Endothelial cell of umbilical vein (primary cell): ENCODE measurements at regions of chr6 and their contacts with region 1.

Region 1: DNA sequence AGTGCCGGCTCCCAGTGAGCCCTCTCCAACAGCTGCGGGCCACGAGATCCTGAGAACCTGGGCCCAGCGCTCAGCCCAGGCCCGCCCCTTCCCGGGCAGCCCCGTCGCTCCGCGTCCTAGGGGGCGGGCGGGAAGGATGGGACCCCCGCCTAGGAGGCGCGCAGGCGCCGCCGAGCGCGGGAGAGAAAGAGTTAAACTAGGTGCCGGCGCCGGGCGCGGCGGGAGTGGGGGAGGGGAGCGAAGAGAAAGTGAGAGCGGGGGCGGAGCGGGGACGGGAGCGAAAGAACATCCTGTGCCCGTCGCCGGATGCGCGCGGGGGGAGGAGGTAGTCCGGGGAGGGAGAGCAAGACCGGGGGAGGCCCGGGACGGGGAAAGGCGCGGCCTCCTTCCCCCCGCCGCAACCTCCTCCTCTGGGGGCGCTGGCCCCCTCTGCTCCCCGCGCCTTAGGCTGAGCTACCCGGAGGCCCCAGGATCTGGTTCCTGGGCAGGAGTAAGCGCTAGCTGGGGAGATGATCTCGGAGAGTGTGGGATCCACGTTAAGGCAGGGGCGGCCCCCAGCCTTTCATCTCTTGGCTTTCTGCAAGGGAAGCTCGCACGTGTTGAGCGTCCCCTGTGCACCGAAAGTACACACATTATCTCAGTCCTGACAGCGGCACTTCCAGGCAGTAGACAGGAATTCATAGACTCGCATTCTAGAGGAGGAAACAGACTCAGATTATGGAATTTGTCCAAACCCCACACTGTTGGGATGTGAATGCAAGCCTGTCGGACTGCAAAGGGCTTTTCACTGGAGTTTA is 4.9 kb upstream of the ARMC12 start:
- DNase-seq: peak; percentile 87
- H3K4me3 ChIP-seq: peak overlapping the region; percentile 51 to 73 (median 61)
- H3K27ac ChIP-seq: peak overlapping the region; percentile 88
- H3K4me1 ChIP-seq: peaks cover 34% of the 10 kb centered on the region
- H3K27me3 ChIP-seq: no peaks in the 10 kb centered on the region
- CTCF ChIP-seq: peak; percentile 5 to 28
- POLR2A ChIP-seq: peak; percentile 75

Region 2: DNA sequence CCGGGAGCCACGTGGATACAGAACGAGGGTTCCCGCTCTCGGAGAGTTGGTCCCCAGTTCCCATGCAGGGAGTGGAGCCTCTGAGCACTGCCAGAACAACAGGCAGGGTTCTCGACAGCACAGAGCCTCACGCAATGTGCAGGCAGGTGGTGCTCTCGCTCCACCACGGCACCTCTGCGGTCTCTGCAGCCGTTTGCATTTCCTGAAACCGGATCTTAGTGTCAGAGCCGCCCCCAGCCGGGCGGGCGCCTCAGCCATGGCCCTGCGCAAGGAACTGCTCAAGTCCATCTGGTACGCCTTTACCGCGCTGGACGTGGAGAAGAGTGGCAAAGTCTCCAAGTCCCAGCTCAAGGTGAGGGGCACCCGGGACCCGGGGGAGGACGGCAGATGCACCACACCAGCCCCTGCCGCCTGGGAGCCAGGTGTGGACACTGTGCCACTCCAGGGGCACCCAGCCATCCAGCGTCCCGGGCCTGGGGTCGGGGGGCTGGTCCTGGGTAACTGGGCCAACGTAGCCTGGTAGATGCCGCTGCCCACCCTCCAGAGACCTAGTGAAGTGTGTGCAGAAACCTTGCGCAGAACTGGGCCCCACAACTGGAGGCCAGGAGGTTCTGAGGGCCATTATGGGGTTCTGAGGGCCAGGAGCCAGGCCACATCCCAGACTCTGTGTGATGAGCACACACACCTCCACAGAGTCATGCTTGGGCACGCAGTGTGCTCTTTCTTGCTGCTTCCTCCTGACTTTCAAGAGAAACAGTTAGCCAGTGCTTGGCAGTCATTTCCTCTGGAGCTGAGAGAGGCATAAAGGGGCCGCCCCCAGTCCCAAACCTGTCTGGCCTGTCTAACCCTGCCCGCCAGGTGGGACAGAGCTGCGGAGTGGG is 434.1 kb before region 1 on chr6 and contains the start of gene DEF6:
- CTCF ChIA-PET with region 1: interaction called, 4 read pairs
- POLR2A ChIA-PET with region 1: no interaction called
- dilution Hi-C with region 1: no loop called
- intact Hi-C with region 1: loop called (anchors 10 kb)
- DNase-seq: peak; percentile 80
- H3K4me3 ChIP-seq: no peak within 1 kb of the TSS
- H3K27ac ChIP-seq: peak within 1 kb of the TSS; percentile 27
- H3K4me1 ChIP-seq: peaks cover 14% of the 10 kb centered on the region
- H3K27me3 ChIP-seq: no peaks in the 10 kb centered on the region
- CTCF ChIP-seq: peak; percentile 74 to 82
- POLR2A ChIP-seq: no peak
- total RNA-seq, gene DEF6: 0.77 and 1.0 TPM in 2 replicates

Region 3: GRCh38 chr6:35562053-35562452 is 169.9 kb before region 1 on chr6:
- CTCF ChIA-PET with region 1: interaction called, 60 read pairs
- POLR2A ChIA-PET with region 1: no interaction called
- dilution Hi-C with region 1: no loop called
- intact Hi-C with region 1: no loop called
- DNase-seq: no peak
- H3K4me3 ChIP-seq: no peak overlapping the region
- H3K27ac ChIP-seq: no peak overlapping the region
- H3K4me1 ChIP-seq: no peaks in the 10 kb centered on the region
- H3K27me3 ChIP-seq: peaks cover 20 to 28% of the 10 kb centered on the region in 2 experiments
- CTCF ChIP-seq: no peak
- POLR2A ChIP-seq: no peak

Region 4: GRCh38 chr6:35601331-35602132 is 130.4 kb before region 1 on chr6:
- CTCF ChIA-PET with region 1: interaction called, 29 read pairs
- POLR2A ChIA-PET with region 1: no interaction called
- dilution Hi-C with region 1: no loop called
- intact Hi-C with region 1: loop called (anchors 2 kb)
- DNase-seq: peak; percentile 88
- H3K4me3 ChIP-seq: peak overlapping the region in 1 of 3 experiments; percentile 21
- H3K27ac ChIP-seq: peak overlapping the region; percentile 96
- H3K4me1 ChIP-seq: peaks cover 72% of the 10 kb centered on the region
- H3K27me3 ChIP-seq: no peaks in the 10 kb centered on the region
- CTCF ChIP-seq: no peak
- POLR2A ChIP-seq: no peak

Region 5: GRCh38 chr6:35640017-35640664 is 91.8 kb before region 1 on chr6:
- CTCF ChIA-PET with region 1: interaction called, 18 read pairs
- POLR2A ChIA-PET with region 1: no interaction called
- dilution Hi-C with region 1: no loop called
- intact Hi-C with region 1: no loop called
- DNase-seq: no peak
- H3K4me3 ChIP-seq: no peak overlapping the region
- H3K27ac ChIP-seq: no peak overlapping the region
- H3K4me1 ChIP-seq: no peaks in the 10 kb centered on the region
- H3K27me3 ChIP-seq: no peaks in the 10 kb centered on the region
- CTCF ChIP-seq: no peak
- POLR2A ChIP-seq: no peak

Region 6: DNA sequence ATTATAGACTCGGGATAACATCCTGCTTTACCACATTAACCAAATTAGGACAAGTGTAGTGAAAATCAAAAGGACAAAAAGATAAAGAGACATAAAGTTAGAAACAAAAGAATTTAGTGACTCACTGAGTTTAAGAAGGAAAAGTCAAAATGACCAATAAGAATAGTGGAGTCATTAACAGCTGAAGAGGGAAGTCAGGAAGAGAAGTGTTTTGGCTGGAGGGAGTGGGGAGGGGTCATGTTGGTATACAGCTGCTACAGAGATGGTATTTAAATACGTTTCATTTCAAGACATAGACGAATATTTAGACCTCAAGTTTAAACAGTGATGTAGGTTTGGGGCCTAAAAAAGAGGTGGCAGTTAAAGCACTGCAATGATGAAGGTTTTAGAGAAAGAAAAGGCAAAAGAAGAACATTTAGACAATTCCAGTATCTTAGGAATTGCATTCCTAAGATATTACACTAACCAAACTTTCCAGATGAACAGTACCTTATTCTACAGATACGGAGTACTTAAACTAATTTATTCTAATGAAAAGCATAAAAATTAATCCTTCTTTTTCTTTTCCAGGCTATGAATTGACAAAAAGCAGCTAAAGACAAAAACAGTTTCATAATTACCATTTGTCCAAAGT is 53.8 kb before region 1 on chr6:
- CTCF ChIA-PET with region 1: interaction called, 100 read pairs
- POLR2A ChIA-PET with region 1: no interaction called
- dilution Hi-C with region 1: no loop called
- intact Hi-C with region 1: no loop called
- DNase-seq: peak; percentile 79
- H3K4me3 ChIP-seq: peak overlapping the region in 1 of 3 experiments; percentile 15
- H3K27ac ChIP-seq: peak overlapping the region; percentile 84
- H3K4me1 ChIP-seq: peaks cover 19% of the 10 kb centered on the region
- H3K27me3 ChIP-seq: no peaks in the 10 kb centered on the region
- CTCF ChIP-seq: no peak
- POLR2A ChIP-seq: no peak

Region 7: GRCh38 chr6:35955976-35956375 is 224.0 kb after region 1 on chr6:
- CTCF ChIA-PET with region 1: interaction called, 13 read pairs
- POLR2A ChIA-PET with region 1: no interaction called
- dilution Hi-C with region 1: no loop called
- intact Hi-C with region 1: loop called (anchors 1 kb)
- DNase-seq: no peak
- H3K4me3 ChIP-seq: no peak overlapping the region
- H3K27ac ChIP-seq: no peak overlapping the region
- H3K4me1 ChIP-seq: peaks cover 16% of the 10 kb centered on the region
- H3K27me3 ChIP-seq: peaks cover 2 to 6% of the 10 kb centered on the region in 2 experiments
- CTCF ChIP-seq: peak; percentile 17 to 27
- POLR2A ChIP-seq: no peak